Activated T-helper 1 cell treated with anti-CD3 and anti-CD28 coated beads, Interleukin-12 subunit alpha, Interleukin-12 subunit beta, Interleukin-2, Interleukin-4 antibody, amounts not matched to agents 30 ng/mL and 10 ng/mL and 1 ng/mL, durations not matched to agents 14 hours and 24 hours and 36 hours (primary cell): ENCODE measurements at regions of chr3 and their contacts with region 1.

Region 1: GRCh38 chr3:9986237-9986725 is 360 bp downstream of the EMC3 start:
- DNase-seq: no peak
- H3K4me3 Mint-ChIP-seq: peak overlapping the region; percentile 97
- H3K27ac Mint-ChIP-seq: peak overlapping the region; percentile 98
- H3K4me1 Mint-ChIP-seq: peaks cover 27% of the 10 kb centered on the region
- H3K27me3 Mint-ChIP-seq: no peaks in the 10 kb centered on the region

Region 2: DNA sequence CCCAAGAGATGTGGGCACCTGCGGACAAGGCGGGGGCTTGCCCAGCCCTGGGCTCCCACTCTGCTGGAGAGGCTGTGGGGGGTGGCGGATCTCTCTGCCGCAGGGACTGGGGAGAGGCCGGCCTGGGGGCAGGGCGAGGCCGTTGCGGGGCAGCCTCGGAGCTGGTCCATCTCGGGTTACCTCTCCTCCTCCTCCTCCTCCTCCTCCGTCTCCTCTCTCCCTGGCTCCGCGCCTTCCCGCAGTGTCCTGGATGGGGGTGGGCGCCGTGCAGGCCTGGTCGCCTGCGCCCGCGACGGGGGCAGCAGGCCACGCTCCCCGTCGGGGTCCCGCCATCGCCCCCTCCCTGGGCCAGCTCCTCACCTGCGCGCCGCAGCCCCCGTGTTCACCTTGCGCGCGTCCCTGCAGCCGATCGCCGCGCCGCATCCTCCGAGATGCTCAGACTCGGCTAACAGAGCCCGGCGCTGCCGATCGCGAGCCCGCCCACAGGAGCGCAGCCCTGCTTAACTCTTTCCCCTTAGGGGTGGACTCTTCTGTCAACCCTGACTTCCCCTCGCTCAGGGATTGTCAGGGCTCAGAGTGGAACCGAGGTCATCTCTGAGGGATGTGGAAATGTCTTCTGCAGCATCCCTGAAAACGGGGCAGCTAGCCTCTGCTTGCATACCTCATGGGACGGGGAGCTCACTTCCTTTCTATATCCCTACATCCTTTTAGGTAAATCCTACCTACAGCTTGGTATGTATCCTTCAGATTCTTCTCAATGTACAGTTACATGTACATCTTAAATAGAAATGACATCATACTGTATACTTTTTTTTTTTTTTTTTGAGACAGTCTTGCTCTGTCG is 34.1 kb before region 1 on chr3 and contains the start of gene PRRT3:
- intact Hi-C with region 1: loop called (anchors 2 kb)
- DNase-seq: peak; percentile 57
- H3K4me3 Mint-ChIP-seq: peak within 1 kb of the TSS; percentile 90
- H3K27ac Mint-ChIP-seq: peak within 1 kb of the TSS; percentile 40
- H3K4me1 Mint-ChIP-seq: peaks cover 14% of the 10 kb centered on the region
- H3K27me3 Mint-ChIP-seq: no peaks in the 10 kb centered on the region
- total RNA-seq, gene PRRT3: 16.4 and 16.8 TPM in 2 replicates

Region 3: GRCh38 chr3:10010486-10011465 is 24.5 kb after region 1 on chr3:
- intact Hi-C with region 1: loop called (anchors 1 kb)
- DNase-seq: peak; percentile 85
- H3K4me3 Mint-ChIP-seq: peak overlapping the region; percentile 70
- H3K27ac Mint-ChIP-seq: no peak overlapping the region
- H3K4me1 Mint-ChIP-seq: peaks cover 29% of the 10 kb centered on the region
- H3K27me3 Mint-ChIP-seq: peaks cover 4% of the 10 kb centered on the region

Region 4: DNA sequence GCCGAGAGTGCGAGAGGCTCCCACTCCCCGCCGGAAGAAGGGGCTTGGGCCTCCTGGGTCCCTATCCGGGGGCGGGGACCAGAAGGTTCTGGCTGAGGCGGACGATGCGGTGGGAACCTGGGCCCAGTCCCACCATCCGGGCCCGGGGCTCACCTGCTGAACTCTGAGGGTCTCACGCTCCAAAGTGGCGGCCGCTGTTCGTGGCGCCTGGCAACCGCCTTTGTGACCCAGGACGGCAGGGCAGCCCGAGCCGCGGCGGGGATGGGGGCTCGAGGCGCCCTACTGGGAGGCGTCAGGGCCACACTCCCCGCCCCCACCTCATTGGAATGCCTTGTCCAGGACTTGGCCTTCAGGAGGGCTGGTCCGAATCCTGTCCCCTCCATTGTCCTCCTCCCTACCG is 121.8 kb after region 1 on chr3 and contains the start of gene FANCD2OS:
- intact Hi-C with region 1: no loop called
- DNase-seq: no peak
- H3K4me3 Mint-ChIP-seq: no peak within 1 kb of the TSS
- H3K27ac Mint-ChIP-seq: no peak within 1 kb of the TSS
- H3K4me1 Mint-ChIP-seq: no peaks in the 10 kb centered on the region
- H3K27me3 Mint-ChIP-seq: peaks cover 2% of the 10 kb centered on the region
- total RNA-seq, gene FANCD2OS: not detected in 2 replicates